B cell (primary cell): ENCODE measurements at regions of chr20 and their contacts with region 1.

Region 1: DNA sequence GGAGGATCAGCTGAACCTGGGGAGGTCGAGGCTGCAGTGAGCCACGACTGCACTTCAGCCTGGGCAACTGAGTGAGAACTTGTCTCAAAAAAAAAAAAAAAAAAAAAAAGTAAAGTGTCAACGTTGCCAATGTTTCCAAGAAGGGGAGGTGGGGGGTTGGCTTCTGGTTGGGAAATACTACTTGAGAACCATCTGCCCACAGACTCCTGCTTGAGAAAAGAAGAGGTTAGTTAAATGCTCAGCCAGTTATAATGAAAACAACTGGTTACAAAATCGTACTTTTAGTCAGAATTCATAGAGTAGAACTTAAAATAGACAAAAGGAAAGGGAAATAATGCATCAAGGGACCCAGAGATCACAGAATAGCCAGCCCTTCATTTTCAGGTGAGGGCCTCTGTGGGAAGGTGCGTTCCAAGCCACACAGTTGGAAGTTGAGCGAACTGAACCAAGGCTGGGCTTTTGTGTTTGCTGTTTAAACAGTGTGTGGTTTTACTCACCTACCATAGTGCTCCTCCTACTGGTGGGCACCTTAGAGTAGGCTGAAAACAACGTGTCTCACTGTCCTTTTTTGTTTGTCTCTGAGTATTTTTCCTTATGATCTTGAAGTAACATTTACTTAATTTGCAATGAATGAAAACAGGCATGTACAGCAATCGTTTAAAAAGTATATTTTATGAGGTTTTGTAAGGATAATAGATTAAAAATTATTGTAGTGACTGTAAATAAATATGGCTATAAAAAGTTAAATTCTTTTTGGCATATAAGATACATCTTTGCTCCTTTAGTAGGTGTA is 200.7 kb downstream of the BCAS1 start:
- DNase-seq: peak; percentile 82
- ATAC-seq: peak; percentile 76
- H3K4me3 ChIP-seq: peak overlapping the region in 2 of 5 experiments; percentile 35 to 54
- H3K4me3 Mint-ChIP-seq: peak overlapping the region; percentile 40
- H3K27ac ChIP-seq: peak overlapping the region; percentile 65 to 79
- H3K27ac Mint-ChIP-seq: peak overlapping the region; percentile 72
- H3K4me1 ChIP-seq: peaks cover 69% of the 10 kb centered on the region in 2 donors
- H3K4me1 Mint-ChIP-seq: peaks cover 64% of the 10 kb centered on the region
- H3K27me3 ChIP-seq: no peaks in the 10 kb centered on the region
- H3K27me3 Mint-ChIP-seq: no peaks in the 10 kb centered on the region
- CTCF ChIP-seq: peak; percentile 89

Region 2: GRCh38 chr20:53578492-53579222 is 291.0 kb before region 1 on chr20:
- CTCF ChIA-PET with region 1: interaction called, 28 read pairs
- POLR2A ChIA-PET with region 1: no interaction called
- intact Hi-C with region 1: loop called (anchors 1 kb)
- DNase-seq: peak; percentile 91
- ATAC-seq: peak; percentile 62
- H3K4me3 ChIP-seq: peak overlapping the region in 1 of 5 experiments; percentile 45
- H3K4me3 Mint-ChIP-seq: peak overlapping the region; percentile 73
- H3K27ac ChIP-seq: peak overlapping the region; percentile 54 to 77
- H3K27ac Mint-ChIP-seq: peak overlapping the region; percentile 93
- H3K4me1 ChIP-seq: peaks cover 53 to 58% of the 10 kb centered on the region in 2 donors
- H3K4me1 Mint-ChIP-seq: peaks cover 54% of the 10 kb centered on the region
- H3K27me3 ChIP-seq: no peaks in the 10 kb centered on the region
- H3K27me3 Mint-ChIP-seq: no peaks in the 10 kb centered on the region
- CTCF ChIP-seq: peak; percentile 94

Region 3: DNA sequence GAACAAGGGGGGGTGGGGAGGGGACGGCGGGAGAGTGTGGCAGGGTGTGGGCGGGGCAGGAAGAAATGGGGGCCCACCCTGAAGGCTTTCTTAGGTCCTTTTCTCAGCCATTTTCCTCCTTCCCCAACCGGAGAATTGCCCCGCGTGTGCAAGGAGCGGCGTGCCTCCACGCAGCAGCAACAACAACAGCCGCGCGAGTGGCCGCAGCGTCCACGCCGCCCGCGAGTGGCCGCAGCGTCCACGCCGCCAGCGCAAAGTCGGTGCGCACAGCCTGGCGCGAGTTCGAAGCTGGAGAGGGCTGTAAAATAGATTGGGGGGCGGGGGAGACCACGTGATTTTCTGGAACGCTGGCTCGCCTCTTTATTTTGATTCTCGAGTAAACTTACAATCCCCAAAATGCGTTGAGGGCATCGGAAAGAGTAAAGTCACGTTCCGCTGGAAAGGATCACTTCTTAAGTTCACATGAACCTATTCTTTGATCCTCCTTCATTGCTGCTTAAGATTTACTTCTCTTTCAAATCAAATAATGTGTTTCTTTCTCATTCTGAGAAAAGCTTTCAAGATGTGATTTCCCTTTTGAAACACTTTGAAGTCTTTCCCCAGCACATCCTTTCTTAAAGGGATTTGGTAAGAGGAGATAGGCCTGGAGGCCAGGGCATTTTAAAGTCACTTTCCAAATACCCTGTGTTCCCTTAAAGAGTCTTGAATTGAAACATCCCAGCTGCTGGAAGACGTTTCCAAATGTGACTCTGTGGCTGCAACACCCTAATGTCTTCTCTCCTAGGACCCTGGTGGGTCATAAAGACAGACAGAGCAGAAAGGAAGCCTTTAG is 209.4 kb before region 1 on chr20:
- CTCF ChIA-PET with region 1: interaction called, 4 read pairs
- POLR2A ChIA-PET with region 1: interaction called, 4 read pairs
- intact Hi-C with region 1: loop called (anchors 5 kb)
- DNase-seq: peak; percentile 52
- ATAC-seq: peak; percentile 46
- H3K4me3 ChIP-seq: peak overlapping the region; percentile 46 to 77 (median 70)
- H3K4me3 Mint-ChIP-seq: peak overlapping the region; percentile 95
- H3K27ac ChIP-seq: peak overlapping the region; percentile 61 to 78
- H3K27ac Mint-ChIP-seq: peak overlapping the region; percentile 92
- H3K4me1 ChIP-seq: peaks cover 44 to 48% of the 10 kb centered on the region in 2 donors
- H3K4me1 Mint-ChIP-seq: peaks cover 59% of the 10 kb centered on the region
- H3K27me3 ChIP-seq: no peaks in the 10 kb centered on the region
- H3K27me3 Mint-ChIP-seq: no peaks in the 10 kb centered on the region
- CTCF ChIP-seq: no peak

Region 4: GRCh38 chr20:53828682-53829254 is 40.9 kb before region 1 on chr20:
- CTCF ChIA-PET with region 1: interaction called, 7 read pairs
- POLR2A ChIA-PET with region 1: no interaction called
- intact Hi-C with region 1: loop called (anchors 5 kb)
- DNase-seq: peak; percentile 27
- ATAC-seq: no peak
- H3K4me3 ChIP-seq: peak overlapping the region; percentile 15 to 50 (median 24)
- H3K4me3 Mint-ChIP-seq: peak overlapping the region; percentile 88
- H3K27ac ChIP-seq: peak overlapping the region; percentile 83 to 93
- H3K27ac Mint-ChIP-seq: peak overlapping the region; percentile 98
- H3K4me1 ChIP-seq: peaks cover 53 to 61% of the 10 kb centered on the region in 2 donors
- H3K4me1 Mint-ChIP-seq: peaks cover 70% of the 10 kb centered on the region
- H3K27me3 ChIP-seq: no peaks in the 10 kb centered on the region
- H3K27me3 Mint-ChIP-seq: no peaks in the 10 kb centered on the region
- CTCF ChIP-seq: no peak

Region 5: DNA sequence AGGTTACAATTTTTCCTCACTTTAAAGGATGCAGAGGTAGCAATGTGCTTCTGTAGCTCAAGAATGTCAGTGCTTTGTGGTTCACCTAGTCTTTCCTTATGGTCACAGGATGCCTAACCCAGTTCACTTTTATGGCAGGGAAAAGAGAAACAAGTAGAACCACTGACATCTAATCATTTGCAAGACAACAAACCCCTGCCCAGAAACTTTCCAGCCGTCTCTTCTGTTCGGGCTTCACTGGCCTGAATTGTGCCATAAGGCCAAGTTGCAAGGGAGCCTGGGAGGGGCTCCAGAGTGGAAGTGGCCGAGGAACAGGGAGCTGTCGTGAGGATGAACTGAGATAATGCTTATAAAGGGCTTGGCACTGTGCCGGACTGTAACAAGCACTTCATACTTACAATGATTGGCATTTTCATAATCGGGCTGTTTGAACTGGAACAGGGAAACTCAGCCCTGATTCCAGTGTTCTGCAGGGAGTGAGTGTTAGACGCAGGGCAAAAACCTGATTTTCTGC is 11.9 kb before region 1 on chr20:
- CTCF ChIA-PET with region 1: interaction called, 10 read pairs
- POLR2A ChIA-PET with region 1: interaction called, 3 read pairs
- intact Hi-C with region 1: no loop called
- DNase-seq: no peak
- ATAC-seq: no peak
- H3K4me3 ChIP-seq: no peak overlapping the region
- H3K4me3 Mint-ChIP-seq: no peak overlapping the region
- H3K27ac ChIP-seq: no peak overlapping the region
- H3K27ac Mint-ChIP-seq: no peak overlapping the region
- H3K4me1 ChIP-seq: peaks cover 13 to 14% of the 10 kb centered on the region in 2 donors
- H3K4me1 Mint-ChIP-seq: peaks cover 16% of the 10 kb centered on the region
- H3K27me3 ChIP-seq: no peaks in the 10 kb centered on the region
- H3K27me3 Mint-ChIP-seq: no peaks in the 10 kb centered on the region
- CTCF ChIP-seq: no peak